ENCODE measurements at regions of chr10 and their contacts with region 1.

Region 1: GRCh38 chr10:6045314-6045848 is 16.8 kb downstream of the IL2RA start:
- DNase-seq: no peak
- H3K4me3 Mint-ChIP-seq: peak overlapping the region; percentile 64
- H3K27ac Mint-ChIP-seq: peak overlapping the region; percentile 89
- H3K4me1 Mint-ChIP-seq: peaks cover 96% of the 10 kb centered on the region
- H3K27me3 Mint-ChIP-seq: no peaks in the 10 kb centered on the region

Region 2: DNA sequence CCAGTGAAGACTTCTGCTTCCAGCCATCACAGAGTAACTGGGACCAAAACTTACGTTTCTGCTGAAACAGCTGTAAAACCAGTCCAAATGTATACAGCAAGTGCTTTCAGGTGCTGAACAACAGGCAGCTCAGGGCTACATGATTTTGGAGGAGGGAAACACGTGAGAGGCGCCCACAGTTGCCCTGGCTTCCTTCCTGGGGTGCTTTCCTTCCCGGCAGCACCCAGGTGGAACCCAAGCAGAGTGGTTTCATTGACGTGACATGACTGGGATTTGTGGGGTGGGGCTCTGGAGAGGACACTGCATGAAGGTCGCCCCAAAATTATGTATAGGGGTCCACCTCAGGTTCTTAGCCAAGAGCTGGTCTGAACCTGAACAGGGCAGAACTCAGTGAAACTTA is 17.5 kb before region 1 on chr10:
- intact Hi-C with region 1: loop called (anchors 2 kb)
- DNase-seq: no peak
- H3K4me3 Mint-ChIP-seq: no peak overlapping the region
- H3K27ac Mint-ChIP-seq: peak overlapping the region; percentile 15
- H3K4me1 Mint-ChIP-seq: peaks cover 55% of the 10 kb centered on the region
- H3K27me3 Mint-ChIP-seq: no peaks in the 10 kb centered on the region